ENCODE measurements at regions of chr2 and their contacts with region 1.

Region 1: DNA sequence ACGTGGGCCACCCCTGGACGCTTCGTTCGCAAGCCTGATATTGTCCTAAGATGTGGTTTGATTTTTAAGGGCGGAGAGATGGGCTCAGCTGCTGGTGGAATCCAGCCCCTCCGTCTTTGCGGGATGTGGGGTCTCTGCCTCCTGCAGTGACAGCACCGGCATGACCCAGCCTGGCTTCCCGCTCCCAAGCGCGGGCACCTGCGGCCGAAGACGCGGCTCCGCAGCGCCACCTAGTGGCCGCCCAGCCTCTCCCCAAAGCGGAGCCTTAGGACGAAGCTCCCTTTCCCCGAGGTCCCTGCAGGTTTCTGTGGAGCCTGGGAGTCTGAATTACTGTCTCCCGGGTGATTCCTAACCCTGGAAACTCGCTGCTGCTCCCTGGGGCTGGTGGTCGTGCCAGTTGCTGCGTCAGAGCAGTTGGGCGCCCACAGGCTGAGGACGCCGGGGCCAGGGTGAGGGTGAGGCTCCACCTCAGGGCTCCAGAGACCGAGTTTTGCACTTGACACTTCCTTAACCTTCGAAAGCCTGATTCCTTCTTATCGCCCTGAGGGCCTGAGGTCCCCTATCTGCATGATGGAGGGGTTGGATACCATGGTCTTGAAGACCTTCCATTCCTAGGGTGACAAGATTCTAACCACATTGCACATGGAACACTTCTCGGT is 137.5 kb downstream of the TPO start:
- DNase-seq: peak; percentile 42 to 78 (median 61)
- H3K4me3 ChIP-seq: no peak overlapping the region
- H3K27ac ChIP-seq: no peak overlapping the region
- H3K4me1 ChIP-seq: peaks cover 2% of the 10 kb centered on the region
- H3K27me3 ChIP-seq: no peaks in the 10 kb centered on the region
- CTCF ChIP-seq: peak; percentile 49 to 91 (median 70)
- EP300 ChIP-seq: no peak
- POLR2A ChIP-seq: no peak

Region 2: GRCh38 chr2:714005-714741 is 836.6 kb before region 1 on chr2:
- intact Hi-C with region 1: loop called in 2 of 4 experiments (anchors 10 kb)
- DNase-seq: peak in 4 of 5 donors; percentile 51 to 57 (median 54)
- H3K4me3 ChIP-seq: no peak overlapping the region
- H3K27ac ChIP-seq: no peak overlapping the region
- H3K4me1 ChIP-seq: peaks cover 1% of the 10 kb centered on the region
- H3K27me3 ChIP-seq: no peaks in the 10 kb centered on the region
- CTCF ChIP-seq: peak in 2 of 3 donors; percentile 36 to 39
- EP300 ChIP-seq: no peak
- POLR2A ChIP-seq: no peak

Region 3: GRCh38 chr2:950080-950966 is 600.5 kb before region 1 on chr2 and contains the start of gene SNTG2:
- intact Hi-C with region 1: loop called in 1 of 4 experiments (anchors 5 kb)
- DNase-seq: peak in 3 of 5 donors; percentile 11 to 54 (median 54)
- H3K4me3 ChIP-seq: peak within 1 kb of the TSS; percentile 38
- H3K27ac ChIP-seq: no peak within 1 kb of the TSS
- H3K4me1 ChIP-seq: peaks cover 4% of the 10 kb centered on the region
- H3K27me3 ChIP-seq: no peaks in the 10 kb centered on the region
- CTCF ChIP-seq: no peak
- EP300 ChIP-seq: no peak
- POLR2A ChIP-seq: no peak
- total RNA-seq, gene SNTG2: 0.73 to 5.7 (median 1.8) TPM in 6 of 7 donors, not detected in the other

Measured in ovary (tissue), 10 donors.